Activated CD8-positive, alpha-beta memory T cell treated with anti-CD3 and anti-CD28 coated beads, Interleukin-2, amount 10 ng/mL, durations not matched to agents 7 days and 5 days (primary cell): ENCODE measurements at regions of chr13 and their contacts with region 1.

Region 1: GRCh38 chr13:45393941-45394570 is 24.1 kb downstream of the SLC25A30 start:
- DNase-seq: peak; percentile 54
- ATAC-seq: peak; percentile 28
- H3K4me3 Mint-ChIP-seq: no peak overlapping the region
- H3K27ac Mint-ChIP-seq: peak overlapping the region; percentile 35
- H3K4me1 Mint-ChIP-seq: peaks cover 47% of the 10 kb centered on the region
- H3K27me3 Mint-ChIP-seq: no peaks in the 10 kb centered on the region

Region 2: GRCh38 chr13:45412274-45413049 is 18.4 kb after region 1 on chr13:
- CTCF ChIA-PET with region 1: interaction called, 23 read pairs
- DNase-seq: no peak
- ATAC-seq: no peak
- H3K4me3 Mint-ChIP-seq: no peak overlapping the region
- H3K27ac Mint-ChIP-seq: no peak overlapping the region
- H3K4me1 Mint-ChIP-seq: peaks cover 18% of the 10 kb centered on the region
- H3K27me3 Mint-ChIP-seq: no peaks in the 10 kb centered on the region

Region 3: GRCh38 chr13:45417790-45418534 is 23.9 kb after region 1 on chr13 and contains the start of gene SLC25A30:
- CTCF ChIA-PET with region 1: interaction called, 23 read pairs
- DNase-seq: peak; percentile 95
- ATAC-seq: peak; percentile 96
- H3K4me3 Mint-ChIP-seq: peak within 1 kb of the TSS; percentile 92
- H3K27ac Mint-ChIP-seq: peak within 1 kb of the TSS; percentile 99
- H3K4me1 Mint-ChIP-seq: peaks cover 18% of the 10 kb centered on the region
- H3K27me3 Mint-ChIP-seq: no peaks in the 10 kb centered on the region
- total RNA-seq, gene SLC25A30: 23.5 to 28.4 TPM